ENCODE measurements at regions of chr4 and their contacts with region 1.

Region 1: DNA sequence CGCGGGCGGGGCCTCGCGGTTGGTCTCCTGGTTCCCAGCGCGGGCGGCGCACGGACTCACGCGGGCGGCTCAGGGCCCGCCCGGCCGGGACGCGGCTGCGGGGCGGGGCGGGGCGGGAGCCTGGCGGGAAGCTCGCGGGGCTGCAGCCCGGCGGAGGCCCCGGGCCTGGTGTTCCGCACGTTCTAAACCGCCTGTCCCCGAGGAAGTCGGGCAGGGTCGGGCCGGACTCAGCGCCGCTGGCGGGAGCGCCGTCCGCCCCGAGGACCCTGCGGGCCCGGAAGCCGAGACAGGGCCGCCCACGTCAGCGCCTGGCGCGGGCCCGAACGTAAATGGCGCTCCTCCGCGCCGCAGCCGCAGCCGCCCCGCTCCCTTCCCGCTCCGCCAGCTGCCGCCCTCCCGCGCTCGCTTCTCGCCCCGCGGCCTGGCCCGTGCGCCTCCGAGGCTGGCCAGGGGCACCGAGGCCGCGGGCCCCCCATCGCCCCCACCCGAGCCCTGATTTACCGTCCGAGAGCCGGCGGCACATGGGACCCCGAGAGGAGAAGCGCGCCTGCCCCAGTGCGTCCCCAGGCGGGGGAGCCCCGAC is 309 bp upstream of the CTBP1 start:
- DNase-seq: peak; percentile 96
- H3K4me3 Mint-ChIP-seq: peak overlapping the region; percentile 90
- H3K27ac Mint-ChIP-seq: peak overlapping the region; percentile 97
- H3K4me1 Mint-ChIP-seq: peaks cover 44% of the 10 kb centered on the region
- H3K27me3 Mint-ChIP-seq: no peaks in the 10 kb centered on the region

Region 2: GRCh38 chr4:1011022-1011694 is 238.1 kb before region 1 on chr4 and contains the start of gene FGFRL1:
- intact Hi-C with region 1: loop called (anchors 2 kb)
- DNase-seq: peak; percentile 97
- H3K4me3 Mint-ChIP-seq: peak within 1 kb of the TSS; percentile 89
- H3K27ac Mint-ChIP-seq: peak within 1 kb of the TSS; percentile 92
- H3K4me1 Mint-ChIP-seq: peaks cover 13% of the 10 kb centered on the region
- H3K27me3 Mint-ChIP-seq: peaks cover 25% of the 10 kb centered on the region
- total RNA-seq, gene FGFRL1: 18.2 and 18.9 TPM in 2 replicates

Region 3: GRCh38 chr4:1200425-1201035 is 48.7 kb before region 1 on chr4:
- intact Hi-C with region 1: loop called (anchors 1 kb)
- DNase-seq: no peak
- H3K4me3 Mint-ChIP-seq: peak overlapping the region; percentile 75
- H3K27ac Mint-ChIP-seq: peak overlapping the region; percentile 99
- H3K4me1 Mint-ChIP-seq: peaks cover 38% of the 10 kb centered on the region
- H3K27me3 Mint-ChIP-seq: no peaks in the 10 kb centered on the region

Region 4: DNA sequence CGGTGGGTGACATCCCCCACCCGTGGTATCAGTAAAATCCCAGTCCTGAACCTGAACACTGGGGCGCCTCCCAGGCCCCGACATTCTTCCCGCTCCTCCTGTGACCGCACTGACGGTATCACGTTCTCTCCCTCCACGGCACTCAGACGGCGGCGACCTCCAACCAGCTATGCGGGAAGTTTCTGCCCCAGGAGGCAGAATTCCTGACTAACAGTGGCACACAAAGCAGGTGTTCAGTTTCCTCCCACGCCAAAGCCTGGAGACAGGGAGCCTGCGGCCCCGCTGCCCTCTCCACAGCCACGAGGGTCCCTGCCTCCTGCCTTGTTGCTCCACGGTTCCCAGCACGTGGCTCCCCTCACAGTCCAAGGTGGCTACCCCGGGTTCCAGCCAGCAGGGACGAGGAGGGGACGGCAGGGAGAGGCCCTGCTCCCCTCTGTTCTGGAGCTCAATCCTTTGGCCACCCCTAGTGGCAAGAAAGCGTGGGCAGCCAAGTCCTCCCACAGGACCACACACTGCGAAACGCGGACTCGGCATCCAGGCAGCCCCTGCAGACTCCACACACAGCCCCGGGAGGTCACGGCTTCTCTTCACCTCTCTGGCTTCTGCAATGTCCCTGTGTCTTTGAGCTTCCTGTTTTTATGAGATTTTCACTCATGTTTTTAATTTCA is 15.5 kb before region 1 on chr4:
- intact Hi-C with region 1: no loop called
- DNase-seq: no peak
- H3K4me3 Mint-ChIP-seq: no peak overlapping the region
- H3K27ac Mint-ChIP-seq: no peak overlapping the region
- H3K4me1 Mint-ChIP-seq: no peaks in the 10 kb centered on the region
- H3K27me3 Mint-ChIP-seq: no peaks in the 10 kb centered on the region

Region 5: DNA sequence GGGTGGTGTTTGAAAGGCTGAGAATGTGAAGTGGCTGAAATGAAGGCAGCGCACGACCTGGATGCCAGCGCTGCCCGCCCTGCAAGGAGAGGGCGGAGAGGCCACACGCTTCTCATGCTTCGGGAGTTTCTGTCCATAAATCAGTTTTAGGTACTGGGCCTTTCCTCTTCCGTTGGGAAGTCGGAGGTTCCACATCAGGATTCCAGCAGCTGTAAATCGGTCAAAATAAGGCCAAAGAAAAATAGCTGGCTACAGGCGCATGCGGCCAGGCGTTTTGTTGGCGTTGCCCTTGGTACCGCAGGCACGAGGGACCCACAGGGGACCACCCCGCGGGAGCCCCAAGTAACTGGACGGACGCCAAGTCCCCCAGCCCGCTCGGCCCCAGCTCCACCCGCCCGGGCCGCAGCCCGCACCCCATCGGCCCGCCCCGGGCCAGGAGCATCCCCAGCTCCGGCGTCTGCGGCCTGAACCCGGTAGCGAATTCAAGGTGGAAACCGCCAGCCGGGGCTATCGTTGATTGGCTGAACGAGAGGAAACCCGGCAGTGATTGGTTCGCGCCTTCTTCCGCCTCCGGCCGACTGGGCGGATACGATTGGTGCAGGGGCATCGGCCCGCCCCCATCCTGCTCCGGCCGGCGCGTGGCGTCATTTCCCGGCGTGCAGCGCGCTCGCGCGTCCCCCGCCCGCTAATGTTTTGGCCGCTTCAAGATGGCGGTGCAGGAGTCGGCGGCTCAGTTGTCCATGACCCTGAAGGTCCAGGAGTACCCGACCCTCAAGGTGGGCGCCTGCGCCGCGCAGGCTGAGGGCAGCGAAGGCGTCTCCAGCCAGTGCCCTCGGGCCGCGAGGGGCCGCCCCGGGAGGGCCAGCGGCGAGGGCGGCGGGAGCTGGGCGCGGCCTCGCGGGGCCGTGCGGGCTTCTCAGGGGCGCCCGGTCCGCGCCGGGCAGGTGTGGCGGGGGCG is 40.2 kb after region 1 on chr4 and contains the start of gene MAEA:
- intact Hi-C with region 1: loop called (anchors 1 kb)
- DNase-seq: peak; percentile 99
- H3K4me3 Mint-ChIP-seq: peak within 1 kb of the TSS; percentile 95
- H3K27ac Mint-ChIP-seq: peak within 1 kb of the TSS; percentile 90
- H3K4me1 Mint-ChIP-seq: peaks cover 26% of the 10 kb centered on the region
- H3K27me3 Mint-ChIP-seq: no peaks in the 10 kb centered on the region
- total RNA-seq, gene MAEA: 61.3 and 62.6 TPM in 2 replicates

Region 6: DNA sequence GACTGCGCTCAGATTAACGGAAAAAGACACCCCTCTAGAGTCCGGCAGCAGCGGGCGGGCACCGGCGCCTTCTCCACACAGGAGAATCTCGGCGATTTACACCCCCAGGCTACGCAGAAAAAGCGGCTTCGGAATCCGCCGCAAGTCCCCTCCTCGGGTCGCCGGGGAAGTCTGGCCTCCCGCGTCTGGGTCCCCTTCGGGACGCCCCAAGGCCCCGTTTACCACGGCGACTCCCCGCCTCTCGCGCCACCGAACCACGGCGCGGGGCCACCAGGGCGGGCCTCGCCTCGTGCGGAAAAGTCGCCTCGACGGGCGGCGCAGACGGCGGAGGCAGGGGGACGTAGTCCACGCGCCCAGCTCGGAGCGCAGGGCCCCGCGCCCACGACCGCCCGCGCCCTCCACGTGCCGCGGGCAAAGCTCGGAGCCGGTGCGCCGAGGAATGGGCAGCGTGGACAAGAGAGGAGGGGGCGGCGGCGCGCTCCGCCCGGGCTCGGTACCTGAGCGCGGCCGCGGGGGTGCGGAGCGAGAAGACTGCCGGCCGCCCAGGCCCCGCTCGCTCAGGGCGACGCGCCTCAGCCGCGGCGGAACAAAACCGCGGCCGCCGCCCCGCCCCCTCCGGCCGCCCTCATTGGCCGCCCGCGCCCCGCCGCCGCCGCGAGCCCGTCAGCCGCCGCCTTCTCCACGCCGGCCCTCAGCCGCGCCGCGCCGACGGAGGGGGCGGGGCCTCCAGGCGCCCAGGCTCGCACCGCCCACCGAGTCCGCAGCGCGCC is 434.7 kb after region 1 on chr4 and contains the start of gene FAM53A:
- intact Hi-C with region 1: loop called (anchors 5 kb)
- DNase-seq: no peak
- H3K4me3 Mint-ChIP-seq: peak within 1 kb of the TSS; percentile 83
- H3K27ac Mint-ChIP-seq: peak within 1 kb of the TSS; percentile 88
- H3K4me1 Mint-ChIP-seq: peaks cover 12% of the 10 kb centered on the region
- H3K27me3 Mint-ChIP-seq: peaks cover 2% of the 10 kb centered on the region
- total RNA-seq, gene FAM53A: 3.5 and 4.0 TPM in 2 replicates

Measured in activated CD4-positive, alpha-beta T cell treated with anti-CD3 and anti-CD28 coated beads, Interleukin-2, amount 10 ng/mL, durations not matched to agents 24 days and 14 days (primary cell).